IMR-90 (cell line): ENCODE measurements at regions of chr16 and their contacts with region 1.

Region 1: DNA sequence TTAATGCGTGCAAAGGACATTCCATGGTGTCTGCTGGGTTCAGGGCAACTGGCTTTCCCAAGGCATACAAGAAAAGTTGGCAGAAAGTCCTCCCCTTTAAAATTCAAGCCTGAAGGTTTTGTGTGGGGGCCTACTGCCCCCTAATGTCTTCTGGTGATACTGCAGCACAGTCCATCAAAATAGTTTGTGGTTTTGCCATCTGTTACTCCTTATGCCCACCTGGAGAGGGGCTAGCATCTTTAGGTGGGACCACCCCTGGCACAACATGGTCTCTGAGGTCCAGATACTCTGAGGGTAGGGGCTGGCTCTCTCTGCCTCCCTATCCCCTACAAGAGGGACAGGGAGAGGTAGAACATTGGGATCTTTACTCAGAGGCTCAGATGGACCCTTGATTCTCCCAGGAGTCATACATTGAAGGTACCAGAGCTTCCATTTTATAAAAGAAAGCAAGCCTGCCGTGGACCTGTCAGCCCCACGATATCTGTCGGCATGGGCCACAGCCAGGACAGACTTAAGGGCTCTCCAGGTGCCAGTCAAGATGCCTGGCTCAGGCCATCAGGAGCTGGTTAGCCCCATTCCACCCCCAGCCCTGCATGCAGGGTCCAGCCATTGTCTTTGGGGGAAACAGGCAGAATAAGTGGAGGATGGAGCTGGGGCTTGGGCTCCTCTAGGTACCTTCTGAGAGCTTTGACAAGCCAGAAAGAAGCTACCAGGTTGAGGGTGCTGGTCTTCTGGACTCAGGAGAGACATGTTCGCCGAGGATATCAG is 6.3 kb downstream of the ESRP2 start:
- DNase-seq: peak; percentile 65
- ATAC-seq: peak; percentile 86
- H3K4me3 ChIP-seq: no peak overlapping the region
- H3K27ac ChIP-seq: no peak overlapping the region
- H3K4me1 ChIP-seq: peaks cover 4% of the 10 kb centered on the region
- H3K27me3 ChIP-seq: no peaks in the 10 kb centered on the region
- CTCF ChIP-seq: peak; percentile 94
- POLR2A ChIP-seq: no peak
- RAD21 ChIP-seq: peak; percentile 92

Region 2: DNA sequence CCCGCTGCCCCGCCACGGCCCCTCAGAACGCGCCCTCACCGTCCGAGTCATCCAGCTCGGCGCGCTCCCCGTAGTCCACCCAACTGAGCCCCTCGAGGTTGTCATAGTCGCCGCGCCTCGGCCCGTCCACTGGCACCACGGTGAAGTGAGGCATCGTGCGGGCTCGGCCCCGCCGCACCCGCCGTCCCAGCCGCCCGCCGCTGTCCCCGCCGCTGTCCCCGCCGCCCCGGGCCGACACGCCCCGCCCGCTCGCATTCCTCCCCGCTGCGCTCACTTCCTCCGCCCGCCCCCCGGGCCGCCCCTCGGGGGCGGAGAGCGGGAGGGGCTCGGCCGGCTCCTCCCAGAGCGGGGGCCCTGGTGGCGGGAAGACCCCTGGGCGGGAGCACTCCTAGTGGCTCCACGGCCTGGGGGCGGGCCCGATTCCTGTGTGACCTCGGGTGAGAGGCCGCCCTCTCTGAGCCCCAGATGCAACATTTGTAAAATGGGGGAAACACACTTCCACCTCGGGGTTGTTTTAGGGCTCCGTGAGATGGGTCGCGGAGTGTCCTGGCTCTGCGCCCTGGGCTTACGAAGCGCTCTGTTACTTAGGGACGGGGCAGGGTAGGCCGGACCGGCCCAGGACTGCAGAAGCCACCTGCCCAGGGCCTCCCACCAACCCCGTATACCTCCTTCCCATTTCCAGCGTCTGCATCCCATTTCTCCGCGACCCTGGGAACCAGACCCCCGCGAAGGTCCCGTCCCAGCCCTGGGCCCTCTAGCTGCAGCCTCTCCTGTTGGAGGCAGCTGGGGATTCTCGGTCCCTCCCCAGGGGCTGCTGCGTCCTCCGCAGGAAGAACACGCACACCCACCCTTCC is 261.0 kb before region 1 on chr16 and contains the start of gene SLC12A4:
- CTCF ChIA-PET with region 1: no interaction called
- POLR2A ChIA-PET with region 1: no interaction called
- dilution Hi-C with region 1: no loop called
- in situ Hi-C with region 1: no loop called
- intact Hi-C with region 1: loop called (anchors 10 kb)
- DNase-seq: peak; percentile 65
- ATAC-seq: peak; percentile 85
- H3K4me3 ChIP-seq: peak within 1 kb of the TSS; percentile 100
- H3K27ac ChIP-seq: peak within 1 kb of the TSS; percentile 99
- H3K4me1 ChIP-seq: peaks cover 30% of the 10 kb centered on the region
- H3K27me3 ChIP-seq: no peaks in the 10 kb centered on the region
- CTCF ChIP-seq: no peak
- POLR2A ChIP-seq: peak; percentile 75
- RAD21 ChIP-seq: no peak
- total RNA-seq, gene SLC12A4: 36.4 and 36.6 TPM in 2 replicates

Region 3: GRCh38 chr16:67979955-67980678 is 249.5 kb before region 1 on chr16 and contains the start of gene DPEP3:
- CTCF ChIA-PET with region 1: no interaction called
- POLR2A ChIA-PET with region 1: no interaction called
- dilution Hi-C with region 1: no loop called
- in situ Hi-C with region 1: loop called (anchors 10 kb)
- intact Hi-C with region 1: no loop called
- DNase-seq: no peak
- ATAC-seq: no peak
- H3K4me3 ChIP-seq: no peak within 1 kb of the TSS
- H3K27ac ChIP-seq: no peak within 1 kb of the TSS
- H3K4me1 ChIP-seq: peaks cover 1% of the 10 kb centered on the region; the same call in 1 of the 2 replicates
- H3K27me3 ChIP-seq: peaks cover 29% of the 10 kb centered on the region
- CTCF ChIP-seq: peak; percentile 46
- POLR2A ChIP-seq: no peak
- RAD21 ChIP-seq: no peak
- total RNA-seq, gene DPEP3: not detected in 2 replicates

Region 4: GRCh38 chr16:67993189-67994039 is 236.2 kb before region 1 on chr16:
- CTCF ChIA-PET with region 1: no interaction called
- POLR2A ChIA-PET with region 1: no interaction called
- dilution Hi-C with region 1: no loop called
- in situ Hi-C with region 1: loop called (anchors 10 kb)
- intact Hi-C with region 1: loop called (anchors 1 kb)
- DNase-seq: peak; percentile 47
- ATAC-seq: peak; percentile 100
- H3K4me3 ChIP-seq: no peak overlapping the region
- H3K27ac ChIP-seq: no peak overlapping the region
- H3K4me1 ChIP-seq: peaks cover 4% of the 10 kb centered on the region; the same call in 1 of the 2 replicates
- H3K27me3 ChIP-seq: peaks cover 5% of the 10 kb centered on the region; the same call in 1 of the 2 replicates
- CTCF ChIP-seq: peak; percentile 94
- POLR2A ChIP-seq: no peak
- RAD21 ChIP-seq: peak; percentile 70

Region 5: GRCh38 chr16:68064791-68065365 is 164.7 kb before region 1 on chr16:
- CTCF ChIA-PET with region 1: interaction called, 4 read pairs
- POLR2A ChIA-PET with region 1: no interaction called
- dilution Hi-C with region 1: no loop called
- in situ Hi-C with region 1: no loop called
- intact Hi-C with region 1: loop called (anchors 1 kb)
- DNase-seq: peak; percentile 91
- ATAC-seq: peak; percentile 86
- H3K4me3 ChIP-seq: no peak overlapping the region
- H3K27ac ChIP-seq: peak overlapping the region; percentile 62
- H3K4me1 ChIP-seq: peaks cover 16% of the 10 kb centered on the region
- H3K27me3 ChIP-seq: no peaks in the 10 kb centered on the region
- CTCF ChIP-seq: peak; percentile 88
- POLR2A ChIP-seq: no peak
- RAD21 ChIP-seq: peak; percentile 65

Region 6: GRCh38 chr16:68085259-68086071 is 144.2 kb before region 1 on chr16 and contains the start of gene NFATC3:
- CTCF ChIA-PET with region 1: no interaction called
- POLR2A ChIA-PET with region 1: no interaction called
- dilution Hi-C with region 1: no loop called
- in situ Hi-C with region 1: loop called (anchors 10 kb)
- intact Hi-C with region 1: loop called (anchors 1 kb)
- DNase-seq: peak; percentile 94
- ATAC-seq: peak; percentile 89
- H3K4me3 ChIP-seq: peak within 1 kb of the TSS; percentile 99
- H3K27ac ChIP-seq: peak within 1 kb of the TSS; percentile 95
- H3K4me1 ChIP-seq: peaks cover 12% of the 10 kb centered on the region
- H3K27me3 ChIP-seq: no peaks in the 10 kb centered on the region
- CTCF ChIP-seq: no peak
- POLR2A ChIP-seq: 0 out of 2 replicates have a peak, but pooled peaks have one; percentile 43
- RAD21 ChIP-seq: no peak
- total RNA-seq, gene NFATC3: 14.7 and 21.5 TPM in 2 replicates

Region 7: GRCh38 chr16:68093816-68094613 is 135.6 kb before region 1 on chr16:
- CTCF ChIA-PET with region 1: interaction called, 8 read pairs
- POLR2A ChIA-PET with region 1: no interaction called
- dilution Hi-C with region 1: no loop called
- in situ Hi-C with region 1: loop called (anchors 10 kb)
- intact Hi-C with region 1: loop called (anchors 1 kb)
- DNase-seq: peak; percentile 69
- ATAC-seq: peak; percentile 69
- H3K4me3 ChIP-seq: no peak overlapping the region
- H3K27ac ChIP-seq: no peak overlapping the region
- H3K4me1 ChIP-seq: peaks cover 2% of the 10 kb centered on the region; the same call in 1 of the 2 replicates
- H3K27me3 ChIP-seq: no peaks in the 10 kb centered on the region
- CTCF ChIP-seq: peak; percentile 54
- POLR2A ChIP-seq: no peak
- RAD21 ChIP-seq: peak; percentile 56

Region 8: DNA sequence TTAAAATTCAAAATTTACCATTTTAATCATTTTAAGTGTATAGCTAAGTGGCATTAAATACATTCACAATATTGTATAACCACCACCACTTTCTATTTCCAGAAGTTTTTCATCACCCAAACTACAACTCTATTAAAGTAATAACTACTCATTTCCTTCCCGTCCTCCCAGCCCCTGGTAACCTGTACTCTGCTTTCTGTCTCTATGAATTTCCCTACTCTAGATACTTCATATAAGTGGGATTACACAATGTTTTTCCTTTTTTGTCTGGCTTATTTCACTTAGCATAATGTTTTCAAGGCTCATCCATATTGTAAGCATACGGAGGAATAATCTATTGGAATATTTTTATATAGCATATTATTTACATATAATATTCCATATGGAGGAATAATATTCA is 23.4 kb before region 1 on chr16:
- CTCF ChIA-PET with region 1: no interaction called
- POLR2A ChIA-PET with region 1: no interaction called
- dilution Hi-C with region 1: no loop called
- in situ Hi-C with region 1: no loop called
- intact Hi-C with region 1: no loop called
- DNase-seq: no peak
- ATAC-seq: no peak
- H3K4me3 ChIP-seq: no peak overlapping the region
- H3K27ac ChIP-seq: no peak overlapping the region
- H3K4me1 ChIP-seq: no peaks in the 10 kb centered on the region
- H3K27me3 ChIP-seq: no peaks in the 10 kb centered on the region
- CTCF ChIP-seq: no peak
- POLR2A ChIP-seq: no peak
- RAD21 ChIP-seq: no peak